Activated CD8-positive, alpha-beta T cell treated with anti-CD3 and anti-CD28 coated beads, Interleukin-2, amount 10 ng/mL, durations not matched to agents 7 days and 5 days (primary cell): ENCODE measurements at regions of chr22 and their contacts with region 1.

Region 1: DNA sequence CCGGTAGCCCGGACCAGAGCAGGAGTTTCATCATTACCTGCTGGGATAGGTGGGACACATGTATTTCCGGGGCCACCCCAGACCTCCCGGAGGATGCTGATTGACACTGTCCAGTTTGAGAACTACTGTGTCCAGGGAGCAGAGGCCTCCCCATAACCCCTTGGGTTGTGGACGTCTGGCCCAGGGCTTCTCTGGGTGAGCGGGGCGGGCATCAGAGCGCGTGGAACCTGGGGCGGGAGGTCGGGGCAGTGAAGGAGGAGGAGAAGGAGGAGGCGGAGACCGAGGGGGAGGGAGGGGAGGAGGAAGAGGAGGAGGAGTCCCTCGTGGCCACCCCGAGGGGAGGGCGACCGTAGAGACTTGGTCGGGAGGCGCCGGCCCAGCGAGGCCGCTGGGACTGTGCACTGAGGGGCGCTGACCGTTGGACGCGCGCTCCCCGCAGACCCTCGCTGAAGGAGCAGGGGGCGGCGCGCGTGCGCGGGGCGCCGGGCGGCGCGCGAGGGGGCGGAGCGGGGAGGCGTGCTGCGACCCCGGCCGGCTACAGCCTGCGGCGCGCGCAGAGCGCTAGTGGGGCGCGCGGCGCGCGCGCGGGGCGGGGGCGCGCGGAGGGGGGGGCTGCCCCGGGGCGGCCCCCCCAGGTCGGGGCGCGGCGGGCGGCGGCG is at the start of gene GRK3:
- DNase-seq: peak; percentile 87
- ATAC-seq: peak; percentile 87
- H3K4me3 Mint-ChIP-seq: peak within 1 kb of the TSS; percentile 98
- H3K27ac Mint-ChIP-seq: peak within 1 kb of the TSS; percentile 95
- H3K4me1 Mint-ChIP-seq: peaks cover 51% of the 10 kb centered on the region
- H3K27me3 Mint-ChIP-seq: no peaks in the 10 kb centered on the region
- total RNA-seq, gene GRK3: 35.0 to 36.6 TPM

Region 2: GRCh38 chr22:25518000-25518663 is 46.3 kb before region 1 on chr22:
- CTCF ChIA-PET with region 1: no interaction called
- POLR2A ChIA-PET with region 1: no interaction called
- DNase-seq: no peak
- ATAC-seq: no peak
- H3K4me3 Mint-ChIP-seq: no peak overlapping the region
- H3K27ac Mint-ChIP-seq: no peak overlapping the region
- H3K4me1 Mint-ChIP-seq: no peaks in the 10 kb centered on the region
- H3K27me3 Mint-ChIP-seq: no peaks in the 10 kb centered on the region

Region 3: GRCh38 chr22:25546751-25547150 is 17.7 kb before region 1 on chr22:
- CTCF ChIA-PET with region 1: interaction called, 21 read pairs
- POLR2A ChIA-PET with region 1: interaction called, 5 read pairs
- DNase-seq: no peak
- ATAC-seq: no peak
- H3K4me3 Mint-ChIP-seq: no peak overlapping the region
- H3K27ac Mint-ChIP-seq: no peak overlapping the region
- H3K4me1 Mint-ChIP-seq: peaks cover 54% of the 10 kb centered on the region
- H3K27me3 Mint-ChIP-seq: no peaks in the 10 kb centered on the region

Region 4: GRCh38 chr22:25702040-25702439 is 137.6 kb after region 1 on chr22:
- CTCF ChIA-PET with region 1: interaction called, 24 read pairs
- POLR2A ChIA-PET with region 1: no interaction called
- DNase-seq: no peak
- ATAC-seq: no peak
- H3K4me3 Mint-ChIP-seq: peak overlapping the region; percentile 9
- H3K27ac Mint-ChIP-seq: peak overlapping the region; percentile 70
- H3K4me1 Mint-ChIP-seq: peaks cover 51% of the 10 kb centered on the region
- H3K27me3 Mint-ChIP-seq: no peaks in the 10 kb centered on the region